ENCODE measurements at regions of chr1 and their contacts with region 1.

Region 1: DNA sequence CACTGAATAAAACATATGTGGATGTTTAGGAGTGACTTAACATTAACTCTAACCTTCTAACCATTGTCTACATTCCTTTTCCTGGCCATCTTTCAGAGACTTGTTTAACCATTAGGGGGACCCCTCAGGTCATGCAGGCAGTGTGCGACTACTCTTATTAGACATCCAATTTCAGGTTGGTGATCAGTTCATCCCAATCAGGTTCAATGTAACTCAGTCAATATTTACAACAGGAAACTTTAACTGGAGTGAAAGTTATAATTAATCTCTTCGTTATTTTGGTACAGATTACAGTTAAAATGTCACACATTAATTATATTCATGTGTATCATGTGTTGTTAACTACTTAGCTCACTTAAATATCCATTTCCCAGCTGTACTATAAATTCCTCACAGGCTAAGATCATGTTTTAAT is 68.8 kb upstream of the RGS1 start:
- DNase-seq: peak; percentile 21
- H3K4me3 Mint-ChIP-seq: no peak overlapping the region
- H3K27ac Mint-ChIP-seq: no peak overlapping the region
- H3K4me1 Mint-ChIP-seq: no peaks in the 10 kb centered on the region
- H3K27me3 Mint-ChIP-seq: no peaks in the 10 kb centered on the region

Region 2: GRCh38 chr1:192491804-192492554 is 14.8 kb before region 1 on chr1:
- CTCF ChIA-PET with region 1: interaction called, 5 read pairs
- intact Hi-C with region 1: loop called (anchors 2 kb)
- DNase-seq: no peak
- H3K4me3 Mint-ChIP-seq: no peak overlapping the region
- H3K27ac Mint-ChIP-seq: no peak overlapping the region
- H3K4me1 Mint-ChIP-seq: peaks cover 3% of the 10 kb centered on the region
- H3K27me3 Mint-ChIP-seq: no peaks in the 10 kb centered on the region